Astrocyte of the cerebellum (primary cell): ENCODE measurements at regions of chr4 and their contacts with region 1.

Region 1: DNA sequence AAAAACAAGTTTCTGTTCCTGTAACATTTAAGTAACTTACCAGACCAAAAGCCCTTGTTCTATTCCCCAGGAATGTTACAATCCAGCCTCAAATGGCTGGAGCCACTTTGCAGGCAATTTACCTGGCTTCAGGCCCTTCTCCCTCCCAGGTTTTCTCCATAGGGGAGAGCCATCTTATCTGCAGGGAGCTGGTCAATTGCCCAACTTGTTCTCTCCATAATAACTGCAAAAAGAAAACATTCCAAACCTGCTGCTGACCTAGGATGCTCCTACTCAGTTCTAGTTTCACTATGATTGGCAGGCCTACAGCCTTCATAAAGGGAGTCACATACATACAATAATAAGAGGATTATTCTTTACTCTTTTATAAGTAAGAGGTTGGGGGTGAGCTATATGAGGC is 670.7 kb downstream of the PCDH7 start:
- DNase-seq: no peak
- H3K4me3 ChIP-seq: no peak overlapping the region
- CTCF ChIP-seq: no peak

Region 2: GRCh38 chr4:31059753-31060522 is 330.9 kb before region 1 on chr4:
- in situ Hi-C with region 1: no loop called
- DNase-seq: no peak
- H3K4me3 ChIP-seq: no peak overlapping the region
- CTCF ChIP-seq: no peak

Region 3: DNA sequence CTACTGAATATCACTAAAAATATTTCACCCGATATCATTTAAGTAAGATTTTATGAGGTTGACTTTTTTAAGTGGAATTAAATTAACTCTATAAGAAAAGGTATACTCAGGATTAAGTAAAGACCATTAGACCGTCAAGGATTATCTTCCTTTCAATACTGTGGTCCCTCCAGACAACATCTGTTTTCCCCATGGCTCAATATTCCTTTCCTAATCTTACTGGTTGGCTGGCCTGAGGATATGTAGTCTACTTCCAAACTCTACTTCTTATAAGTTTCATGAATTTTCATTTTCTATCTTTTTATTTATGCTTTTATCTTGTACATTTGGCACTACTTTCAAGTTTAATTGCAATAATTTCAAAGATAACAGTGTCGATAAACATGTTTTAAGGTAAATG is 54.7 kb after region 1 on chr4:
- in situ Hi-C with region 1: loop called (anchors 5 kb)
- DNase-seq: no peak
- H3K4me3 ChIP-seq: no peak overlapping the region
- CTCF ChIP-seq: no peak

Region 4: DNA sequence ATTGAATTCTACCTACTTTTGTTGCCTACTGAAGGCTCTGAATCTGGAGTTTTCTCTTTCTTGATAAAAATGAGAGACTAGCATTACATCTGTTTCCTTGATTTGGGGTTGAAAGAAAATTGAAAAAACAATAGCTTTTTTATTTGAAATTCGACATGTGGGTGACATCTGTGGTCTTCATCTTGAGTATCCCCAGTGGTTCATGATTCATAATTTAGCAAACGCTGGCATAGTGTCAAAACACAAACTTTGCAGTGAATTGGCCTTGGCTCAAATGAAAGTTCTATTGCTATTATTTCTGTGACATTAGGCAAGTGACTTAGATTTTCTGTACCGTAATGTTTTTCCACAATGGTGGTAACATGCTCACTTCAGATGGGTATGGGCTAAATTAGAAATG is 76.9 kb after region 1 on chr4:
- in situ Hi-C with region 1: no loop called
- DNase-seq: peak; percentile 2
- H3K4me3 ChIP-seq: no peak overlapping the region
- CTCF ChIP-seq: no peak